GM12878 (cell line): ENCODE measurements at regions of chr1 and their contacts with region 1.

Region 1: GRCh38 chr1:56477164-56478111 is 101.9 kb downstream of the PLPP3 start:
- DNase-seq: peak; percentile 17
- ATAC-seq: peak; percentile 75
- H3K4me3 ChIP-seq: no peak overlapping the region
- H3K27ac ChIP-seq: no peak overlapping the region
- H3K4me1 ChIP-seq: peaks cover 8% of the 10 kb centered on the region; the same call in 1 of the 2 replicates
- H3K27me3 ChIP-seq: peaks cover 0 to 5% of the 10 kb centered on the region in 2 experiments; a peak in 2 of 4 replicates
- CTCF ChIP-seq: no peak
- EP300 ChIP-seq: 0 out of 4 replicates have a peak, but pooled peaks of 1 of the 2 experiments have one; percentile 22
- POLR2A ChIP-seq: no peak
- RAD21 ChIP-seq: no peak

Region 2: DNA sequence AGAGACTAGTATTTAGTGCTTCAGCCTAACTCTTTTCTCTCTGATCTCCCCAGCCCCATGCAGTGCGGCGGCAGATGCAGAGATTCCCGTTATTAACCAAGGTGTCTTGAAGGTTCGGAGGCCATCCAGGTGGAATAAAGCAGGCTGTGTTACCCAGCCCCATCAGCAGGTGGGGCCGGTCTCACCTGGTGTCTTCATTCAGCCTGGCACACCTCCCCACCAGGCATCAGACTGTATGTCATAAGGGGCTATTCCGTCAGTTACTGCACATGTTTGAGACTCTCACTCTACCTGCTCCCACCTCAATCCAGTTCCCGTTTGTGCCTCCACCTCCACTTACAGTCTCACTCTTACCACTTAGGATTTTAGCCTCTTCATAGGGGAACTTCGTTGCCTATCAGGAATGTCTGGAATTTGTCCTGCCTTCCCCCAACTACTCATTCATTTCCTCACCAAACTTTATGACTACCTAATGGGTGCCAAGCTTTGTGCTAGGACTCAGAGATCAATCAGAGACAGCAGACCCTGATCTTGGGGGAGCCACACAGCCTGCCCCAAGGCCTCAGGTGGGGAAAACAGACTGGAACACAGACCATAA is 68.2 kb before region 1 on chr1:
- CTCF ChIA-PET with region 1: interaction called, 31 read pairs
- POLR2A ChIA-PET with region 1: no interaction called
- RAD21 ChIA-PET with region 1: interaction called, 9 read pairs
- SMC1A ChIA-PET with region 1: interaction called, 25 read pairs
- in situ Hi-C with region 1: no loop called
- intact Hi-C with region 1: no loop called
- DNase-seq: no peak
- ATAC-seq: peak; percentile 79
- H3K4me3 ChIP-seq: no peak overlapping the region
- H3K27ac ChIP-seq: no peak overlapping the region
- H3K4me1 ChIP-seq: no peaks in the 10 kb centered on the region
- H3K27me3 ChIP-seq: no peaks in the 10 kb centered on the region
- CTCF ChIP-seq: peak; percentile 49 to 53 (median 52); a peak in 5 of 6 replicates
- EP300 ChIP-seq: no peak
- POLR2A ChIP-seq: no peak
- RAD21 ChIP-seq: peak; percentile 44

Region 3: GRCh38 chr1:56496821-56497772 is 19.7 kb after region 1 on chr1:
- CTCF ChIA-PET with region 1: interaction called, 4 read pairs
- POLR2A ChIA-PET with region 1: interaction called, 6 read pairs
- RAD21 ChIA-PET with region 1: interaction called, 3 read pairs
- SMC1A ChIA-PET with region 1: interaction called, 13 read pairs
- in situ Hi-C with region 1: no loop called
- intact Hi-C with region 1: no loop called
- DNase-seq: no peak
- ATAC-seq: peak; percentile 50
- H3K4me3 ChIP-seq: no peak overlapping the region
- H3K27ac ChIP-seq: no peak overlapping the region
- H3K4me1 ChIP-seq: no peaks in the 10 kb centered on the region
- H3K27me3 ChIP-seq: no peaks in the 10 kb centered on the region
- CTCF ChIP-seq: no peak
- EP300 ChIP-seq: no peak
- POLR2A ChIP-seq: no peak
- RAD21 ChIP-seq: no peak

Region 4: GRCh38 chr1:56516539-56517252 is 39.3 kb after region 1 on chr1:
- CTCF ChIA-PET with region 1: interaction called, 3 read pairs
- POLR2A ChIA-PET with region 1: interaction called, 7 read pairs
- RAD21 ChIA-PET with region 1: interaction called, 25 read pairs
- SMC1A ChIA-PET with region 1: interaction called, 30 read pairs
- in situ Hi-C with region 1: no loop called
- intact Hi-C with region 1: no loop called
- DNase-seq: peak; percentile 43
- ATAC-seq: peak; percentile 96
- H3K4me3 ChIP-seq: peak overlapping the region; percentile 14; the same call in 1 of the 2 replicates
- H3K27ac ChIP-seq: peak overlapping the region; percentile 45; the same call in 1 of the 2 replicates
- H3K4me1 ChIP-seq: peaks cover 32% of the 10 kb centered on the region
- H3K27me3 ChIP-seq: no peaks in the 10 kb centered on the region; a peak in 2 of 4 replicates
- CTCF ChIP-seq: no peak
- EP300 ChIP-seq: peak in 1 of 2 experiments; percentile 10; a peak in 1 of 4 replicates
- POLR2A ChIP-seq: peak; percentile 34; the same call in 1 of the 2 replicates
- RAD21 ChIP-seq: no peak

Region 5: DNA sequence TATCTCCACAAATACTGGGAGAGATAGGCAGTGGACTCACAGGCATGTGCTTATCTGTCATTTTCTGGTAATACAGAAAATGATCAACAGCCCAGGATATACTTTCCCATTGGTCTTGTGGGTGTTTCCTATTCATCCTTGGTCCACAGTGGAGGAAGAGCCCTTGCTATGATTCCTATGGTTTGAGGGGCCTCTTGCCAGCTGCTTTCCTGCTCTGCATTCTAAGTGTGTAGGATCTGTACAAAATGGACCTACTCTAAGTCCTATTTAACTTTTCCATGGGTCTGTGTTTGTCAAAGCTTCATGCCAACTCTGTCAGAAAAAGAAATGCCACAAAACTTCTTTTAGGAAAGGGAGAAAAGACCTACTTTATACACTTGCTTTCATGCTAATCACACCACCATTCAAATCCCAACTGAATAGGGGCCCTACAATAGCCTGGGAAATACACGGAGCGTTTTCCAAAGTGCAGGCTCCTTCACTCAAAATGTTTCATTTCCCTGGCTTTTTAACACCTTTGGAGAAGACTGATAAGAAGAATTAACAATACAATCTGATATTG is 85.5 kb after region 1 on chr1:
- CTCF ChIA-PET with region 1: interaction called, 6 read pairs
- POLR2A ChIA-PET with region 1: interaction called, 23 read pairs
- RAD21 ChIA-PET with region 1: interaction called, 138 read pairs
- SMC1A ChIA-PET with region 1: interaction called, 348 read pairs
- in situ Hi-C with region 1: no loop called
- intact Hi-C with region 1: no loop called
- DNase-seq: no peak
- ATAC-seq: no peak
- H3K4me3 ChIP-seq: no peak overlapping the region
- H3K27ac ChIP-seq: no peak overlapping the region
- H3K4me1 ChIP-seq: no peaks in the 10 kb centered on the region; the same call in 1 of the 2 replicates
- H3K27me3 ChIP-seq: no peaks in the 10 kb centered on the region
- CTCF ChIP-seq: no peak
- EP300 ChIP-seq: no peak
- POLR2A ChIP-seq: no peak
- RAD21 ChIP-seq: no peak